Heart right ventricle (tissue), 16 donors: ENCODE measurements at regions of chr6 and their contacts with region 1.

Region 1: DNA sequence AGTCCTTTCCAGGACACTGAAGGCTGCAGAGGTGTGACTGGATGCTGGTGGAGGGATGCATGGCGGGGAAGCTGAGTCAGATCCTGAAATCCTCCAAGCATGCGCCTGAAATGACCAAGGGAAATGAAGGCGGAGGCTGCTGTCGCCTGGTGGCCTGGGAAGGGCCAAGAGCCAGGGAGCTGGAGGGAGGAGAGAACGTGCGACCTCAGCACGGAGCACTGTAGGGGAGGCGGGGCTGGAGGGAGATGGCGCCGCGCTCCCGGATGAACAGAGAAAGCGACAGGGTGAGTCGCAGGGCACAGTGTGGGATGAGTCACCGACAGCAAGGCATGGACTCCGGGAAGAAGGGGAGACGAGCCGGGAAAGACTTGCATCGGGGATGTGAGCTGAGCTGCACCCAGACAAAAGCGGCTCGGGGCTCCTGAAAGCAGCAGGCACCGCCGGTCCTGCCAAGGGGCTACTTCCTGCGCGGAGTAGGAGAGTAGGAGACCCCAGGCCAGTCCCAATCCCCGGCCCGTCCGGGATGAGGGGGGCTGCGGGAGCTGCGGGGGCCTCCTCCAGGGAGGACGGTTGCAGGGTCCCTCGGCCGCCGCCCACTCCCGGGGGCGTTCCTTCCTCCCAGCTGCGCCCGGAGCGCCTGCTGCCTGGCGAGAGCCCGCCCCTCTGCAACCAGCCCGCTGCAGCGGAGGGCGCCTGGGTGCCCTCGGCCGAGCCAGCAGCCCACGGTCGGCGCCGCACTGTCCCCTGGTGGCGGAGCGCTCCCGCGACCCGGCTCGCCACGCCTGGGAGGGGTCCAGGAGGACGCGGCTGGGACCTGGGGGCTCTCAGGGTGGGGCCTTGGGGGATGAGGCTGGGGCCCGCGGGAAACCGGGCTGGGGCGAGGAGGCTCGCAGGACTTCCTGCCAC is 11.0 kb upstream of the NQO2 start:
- DNase-seq: peak; percentile 90 to 95
- ATAC-seq: peak; percentile 85 to 94 (median 88)
- H3K4me3 ChIP-seq: peak overlapping the region; percentile 59 to 97 (median 75)
- H3K27ac ChIP-seq: peak overlapping the region; percentile 77 to 99 (median 98)
- H3K4me1 ChIP-seq: peaks cover 0 to 34% (median 20%) of the 10 kb centered on the region in 9 donors
- H3K27me3 ChIP-seq: no peaks in the 10 kb centered on the region
- CTCF ChIP-seq: peak; percentile 70 to 93 (median 88)

Region 2: GRCh38 chr6:2765166-2765895 is 223.3 kb before region 1 on chr6 and contains the start of gene WRNIP1:
- intact Hi-C with region 1: loop called in 1 of 10 experiments (anchors 5 kb)
- DNase-seq: peak; percentile 98 to 99
- ATAC-seq: peak; percentile 93 to 96 (median 94)
- H3K4me3 ChIP-seq: peak within 1 kb of the TSS; percentile 69 to 94 (median 88)
- H3K27ac ChIP-seq: peak within 1 kb of the TSS; percentile 91 to 99 (median 97)
- H3K4me1 ChIP-seq: peaks cover 2 to 57% (median 40%) of the 10 kb centered on the region in 9 donors
- H3K27me3 ChIP-seq: no peaks in the 10 kb centered on the region
- CTCF ChIP-seq: peak; percentile 38 to 84 (median 73)
- total RNA-seq, gene WRNIP1: 29.7 to 41.7 (median 35.4) TPM

Region 3: DNA sequence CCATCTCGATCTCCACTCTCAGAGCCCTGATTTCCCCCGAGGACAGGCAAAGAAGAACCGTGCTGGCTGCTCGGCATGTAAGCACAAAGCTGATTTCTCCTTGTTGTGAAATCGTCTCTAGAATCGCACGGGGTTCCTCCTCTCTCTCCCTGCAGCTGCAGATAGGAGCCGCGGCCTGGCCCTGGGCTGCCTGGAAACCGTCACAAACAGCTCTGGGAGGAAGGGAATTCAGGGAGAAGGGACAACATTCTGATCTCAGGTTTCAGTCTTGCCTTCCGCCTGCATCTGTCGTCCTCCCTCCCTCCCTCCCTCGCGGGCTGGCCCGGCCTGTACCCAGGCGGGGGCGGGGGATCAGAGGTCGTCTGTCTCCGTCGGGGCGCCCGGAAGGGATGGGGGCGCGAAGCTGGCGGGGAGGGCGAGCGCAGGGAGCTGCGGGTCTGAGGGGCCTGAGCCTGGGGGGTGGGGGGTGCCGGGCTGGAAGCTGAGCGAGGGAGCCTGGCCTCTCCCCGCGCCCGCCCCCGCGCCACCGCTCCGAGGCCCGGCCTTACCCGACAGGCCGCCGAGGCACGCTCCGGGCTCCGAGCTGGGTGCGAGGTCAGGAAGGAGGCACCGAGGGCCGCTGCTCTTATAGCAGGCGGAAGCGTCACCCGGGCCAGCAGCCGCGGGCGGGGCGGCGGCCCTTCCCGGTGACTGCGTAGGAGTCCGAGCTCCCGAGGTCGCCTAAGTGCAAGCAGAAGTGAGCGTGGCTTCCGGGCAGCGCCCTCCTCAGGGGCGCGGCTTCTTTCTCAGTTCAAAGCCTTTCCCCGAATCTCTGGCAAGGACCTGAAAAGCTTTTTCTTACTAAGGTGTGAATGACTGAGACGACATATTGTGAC is 147.2 kb before region 1 on chr6 and contains the start of gene SERPINB1:
- intact Hi-C with region 1: loop called in 9 of 10 experiments (anchors 1 to 10 kb)
- DNase-seq: peak; percentile 90 to 92
- ATAC-seq: peak; percentile 87 to 95 (median 93)
- H3K4me3 ChIP-seq: peak within 1 kb of the TSS; percentile 29 to 73 (median 66)
- H3K27ac ChIP-seq: peak within 1 kb of the TSS; percentile 95 to 99 (median 97)
- H3K4me1 ChIP-seq: peaks cover 13 to 76% (median 35%) of the 10 kb centered on the region in 9 donors
- H3K27me3 ChIP-seq: no peaks in the 10 kb centered on the region
- CTCF ChIP-seq: peak in 3 of 9 donors; percentile 41 to 50 (median 43)
- total RNA-seq, gene SERPINB1: 17.7 to 73.7 (median 22.5) TPM

Region 4: GRCh38 chr6:2931970-2932748 is 56.5 kb before region 1 on chr6:
- intact Hi-C with region 1: loop called in 2 of 10 experiments (anchors 10 kb)
- DNase-seq: peak; percentile 70 to 86
- ATAC-seq: peak; percentile 87 to 97 (median 95)
- H3K4me3 ChIP-seq: peak overlapping the region in 3 of 10 donors; percentile 10 to 30 (median 25)
- H3K27ac ChIP-seq: peak overlapping the region in 8 of 10 donors; percentile 0 to 56 (median 44)
- H3K4me1 ChIP-seq: peaks cover 0 to 9% (median 5%) of the 10 kb centered on the region in 9 donors
- H3K27me3 ChIP-seq: no peaks in the 10 kb centered on the region
- CTCF ChIP-seq: peak in 8 of 9 donors; percentile 85 to 99 (median 98)

Region 5: GRCh38 chr6:2971420-2972218 is 17.1 kb before region 1 on chr6 and contains the start of gene SERPINB6:
- intact Hi-C with region 1: loop called in 3 of 10 experiments (anchors 1 to 2 kb)
- DNase-seq: peak; percentile 84 to 89
- ATAC-seq: peak; percentile 89 to 94 (median 92)
- H3K4me3 ChIP-seq: peak within 1 kb of the TSS; percentile 33 to 88 (median 78)
- H3K27ac ChIP-seq: peak within 1 kb of the TSS; percentile 95 to 100 (median 98)
- H3K4me1 ChIP-seq: peaks cover 0 to 41% (median 27%) of the 10 kb centered on the region in 9 donors
- H3K27me3 ChIP-seq: no peaks in the 10 kb centered on the region
- CTCF ChIP-seq: no peak
- total RNA-seq, gene SERPINB6: 163 to 261 (median 183) TPM